Activated CD8-positive, alpha-beta T cell treated with anti-CD3 and anti-CD28 coated beads for 36 hours (primary cell): ENCODE measurements at regions of chr2 and their contacts with region 1.

Region 1: GRCh38 chr2:43559391-43560230 is 36.2 kb downstream of the THADA start:
- DNase-seq: peak; percentile 16
- ATAC-seq: peak; percentile 81
- H3K4me3 Mint-ChIP-seq: no peak overlapping the region
- H3K27ac Mint-ChIP-seq: peak overlapping the region; percentile 82
- H3K4me1 Mint-ChIP-seq: peaks cover 33% of the 10 kb centered on the region
- H3K27me3 Mint-ChIP-seq: no peaks in the 10 kb centered on the region
- CTCF ChIP-seq: no peak

Region 2: DNA sequence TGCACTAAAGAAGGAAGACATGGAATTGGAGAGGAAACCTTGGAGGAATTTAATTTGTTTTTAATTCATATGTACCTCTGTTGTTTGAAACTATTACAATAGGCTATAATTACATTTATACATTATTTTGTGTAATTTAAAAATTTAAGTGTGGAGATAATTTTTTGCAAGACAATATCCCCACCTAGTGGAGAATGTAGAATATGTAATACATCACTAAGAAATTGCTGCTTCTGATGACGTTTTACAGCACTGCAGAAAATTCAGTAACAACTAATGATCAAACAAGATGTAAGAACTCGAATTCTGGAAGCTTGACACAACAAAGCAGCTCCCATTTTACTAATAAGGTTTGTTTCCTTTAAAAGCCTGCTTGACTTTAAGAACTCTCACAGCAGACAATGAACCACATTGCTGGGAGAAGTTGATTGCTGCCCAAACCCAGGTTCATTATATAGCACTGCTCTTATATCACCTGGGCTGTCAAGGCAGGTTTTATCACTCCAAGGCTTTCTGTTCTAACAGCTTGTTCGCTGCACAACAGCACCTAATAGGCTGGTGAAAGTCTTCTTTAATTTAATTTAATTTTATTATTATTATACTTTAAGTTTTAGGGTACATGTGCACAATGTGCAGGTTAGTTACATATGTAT is 17.2 kb before region 1 on chr2:
- CTCF ChIA-PET with region 1: interaction called, 12 read pairs
- POLR2A ChIA-PET with region 1: no interaction called
- intact Hi-C with region 1: no loop called
- DNase-seq: no peak
- ATAC-seq: peak; percentile 45
- H3K4me3 Mint-ChIP-seq: no peak overlapping the region
- H3K27ac Mint-ChIP-seq: no peak overlapping the region
- H3K4me1 Mint-ChIP-seq: peaks cover 7% of the 10 kb centered on the region
- H3K27me3 Mint-ChIP-seq: no peaks in the 10 kb centered on the region
- CTCF ChIP-seq: peak; percentile 74

Region 3: GRCh38 chr2:43569921-43570320 is 10.3 kb after region 1 on chr2:
- CTCF ChIA-PET with region 1: interaction called, 62 read pairs
- POLR2A ChIA-PET with region 1: interaction called, 5 read pairs
- intact Hi-C with region 1: loop called (anchors 1 kb)
- DNase-seq: peak; percentile 62
- ATAC-seq: peak; percentile 86
- H3K4me3 Mint-ChIP-seq: no peak overlapping the region
- H3K27ac Mint-ChIP-seq: peak overlapping the region; percentile 74
- H3K4me1 Mint-ChIP-seq: peaks cover 31% of the 10 kb centered on the region
- H3K27me3 Mint-ChIP-seq: no peaks in the 10 kb centered on the region
- CTCF ChIP-seq: no peak

Region 4: GRCh38 chr2:43576981-43577892 is 17.6 kb after region 1 on chr2:
- CTCF ChIA-PET with region 1: interaction called, 62 read pairs
- POLR2A ChIA-PET with region 1: no interaction called
- intact Hi-C with region 1: no loop called
- DNase-seq: peak; percentile 40
- ATAC-seq: no peak
- H3K4me3 Mint-ChIP-seq: no peak overlapping the region
- H3K27ac Mint-ChIP-seq: no peak overlapping the region
- H3K4me1 Mint-ChIP-seq: peaks cover 7% of the 10 kb centered on the region
- H3K27me3 Mint-ChIP-seq: no peaks in the 10 kb centered on the region
- CTCF ChIP-seq: peak; percentile 86

Region 5: DNA sequence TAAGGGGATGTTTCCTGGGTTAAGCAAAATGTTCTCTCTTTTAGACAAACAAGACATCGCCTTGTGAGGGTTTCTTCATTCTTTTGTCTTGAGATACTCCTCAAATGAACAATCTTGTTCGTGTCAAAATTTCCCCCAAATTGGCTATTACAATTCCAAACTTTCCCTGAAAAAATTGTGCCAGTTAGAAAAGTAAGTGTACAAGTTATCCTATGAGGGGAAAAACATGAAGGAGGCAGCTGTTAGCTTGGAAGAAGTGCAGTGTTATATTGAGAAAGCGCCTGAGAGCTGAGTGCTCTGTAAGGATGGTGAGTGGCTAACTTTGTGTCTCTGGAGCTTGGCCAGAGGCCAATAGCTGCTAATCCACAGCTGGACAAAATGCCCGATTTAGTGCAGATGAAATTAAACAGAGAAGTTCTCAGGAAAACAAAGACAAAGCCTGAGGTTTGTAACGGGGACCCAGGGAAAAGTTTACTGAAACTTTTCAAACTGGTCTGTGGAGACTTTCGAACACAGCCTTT is 63.4 kb after region 1 on chr2:
- CTCF ChIA-PET with region 1: no interaction called
- POLR2A ChIA-PET with region 1: no interaction called
- intact Hi-C with region 1: no loop called
- DNase-seq: no peak
- ATAC-seq: no peak
- H3K4me3 Mint-ChIP-seq: no peak overlapping the region
- H3K27ac Mint-ChIP-seq: no peak overlapping the region
- H3K4me1 Mint-ChIP-seq: no peaks in the 10 kb centered on the region
- H3K27me3 Mint-ChIP-seq: peaks cover 9% of the 10 kb centered on the region
- CTCF ChIP-seq: no peak